A673 (cell line): ENCODE measurements at regions of chr3 and their contacts with region 1.

Region 1: GRCh38 chr3:184298759-184299496 is at the start of gene PSMD2:
- DNase-seq: peak; percentile 98
- H3K4me3 ChIP-seq: peak within 1 kb of the TSS; percentile 88
- H3K27ac ChIP-seq: peak within 1 kb of the TSS; percentile 80
- H3K4me1 ChIP-seq: peaks cover 9% of the 10 kb centered on the region
- H3K27me3 ChIP-seq: no peaks in the 10 kb centered on the region
- CTCF ChIP-seq: no peak
- total RNA-seq, gene PSMD2: 622 and 645 TPM in 2 replicates

Region 2: DNA sequence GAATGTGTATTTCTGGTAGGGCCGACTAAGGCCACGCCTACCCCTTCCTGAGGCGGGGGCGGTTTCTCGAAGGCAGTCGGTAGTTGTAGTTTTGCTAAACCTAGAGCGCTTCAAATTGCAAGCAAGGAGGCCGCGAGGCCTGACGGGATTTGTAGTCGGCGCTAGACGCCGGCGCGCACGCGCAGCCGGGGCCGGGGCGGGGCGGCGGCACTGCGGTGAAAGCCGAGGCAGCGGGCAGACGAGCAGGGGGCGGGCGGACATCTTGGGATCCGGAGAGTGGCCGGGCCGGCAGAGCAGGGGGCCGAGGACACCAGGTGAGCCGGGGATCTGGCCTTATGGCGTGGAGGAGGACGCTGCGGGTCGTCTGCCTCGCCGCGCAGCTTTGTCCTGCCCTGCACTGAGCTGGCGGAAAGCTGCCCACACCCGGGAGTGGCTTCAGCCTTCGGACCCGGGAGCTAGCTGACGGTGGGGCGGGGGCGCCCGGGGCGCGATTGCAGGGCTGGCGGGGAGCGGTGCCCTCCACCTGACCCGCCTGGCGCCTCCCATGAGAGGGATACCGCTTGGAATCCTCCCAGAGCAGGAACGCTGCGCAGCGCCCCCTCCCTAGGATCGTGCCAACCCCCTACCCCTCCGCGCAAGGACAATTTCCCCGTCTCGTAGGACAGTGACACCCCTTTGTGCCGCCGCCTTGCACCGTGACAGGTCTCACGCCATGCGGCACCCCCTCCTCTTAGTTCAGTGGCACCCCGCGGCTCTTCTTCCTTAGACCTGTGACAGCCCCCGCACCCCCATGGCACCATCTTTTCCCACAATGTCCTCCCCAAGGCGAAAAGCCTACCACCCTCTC is 124.1 kb before region 1 on chr3 and contains the start of gene AP2M1:
- CTCF ChIA-PET with region 1: no interaction called
- POLR2A ChIA-PET with region 1: no interaction called
- intact Hi-C with region 1: loop called (anchors 5 kb)
- DNase-seq: peak; percentile 99
- H3K4me3 ChIP-seq: peak within 1 kb of the TSS; percentile 95
- H3K27ac ChIP-seq: peak within 1 kb of the TSS; percentile 89
- H3K4me1 ChIP-seq: peaks cover 9% of the 10 kb centered on the region
- H3K27me3 ChIP-seq: no peaks in the 10 kb centered on the region
- CTCF ChIP-seq: no peak; the same call in 1 of the 2 replicates
- total RNA-seq, gene AP2M1: 382 and 419 TPM in 2 replicates

Region 3: GRCh38 chr3:184209146-184209923 is 89.6 kb before region 1 on chr3:
- CTCF ChIA-PET with region 1: no interaction called
- POLR2A ChIA-PET with region 1: no interaction called
- intact Hi-C with region 1: no loop called
- DNase-seq: no peak
- H3K4me3 ChIP-seq: no peak overlapping the region
- H3K27ac ChIP-seq: no peak overlapping the region
- H3K4me1 ChIP-seq: no peaks in the 10 kb centered on the region
- H3K27me3 ChIP-seq: peaks cover 15% of the 10 kb centered on the region
- CTCF ChIP-seq: no peak

Region 4: GRCh38 chr3:184314363-184314699 is 15.4 kb after region 1 on chr3 and contains the start of gene EIF4G1:
- CTCF ChIA-PET with region 1: no interaction called
- POLR2A ChIA-PET with region 1: no interaction called
- intact Hi-C with region 1: loop called (anchors 1 kb)
- DNase-seq: peak; percentile 95
- H3K4me3 ChIP-seq: peak within 1 kb of the TSS; percentile 93
- H3K27ac ChIP-seq: peak within 1 kb of the TSS; percentile 92
- H3K4me1 ChIP-seq: peaks cover 25% of the 10 kb centered on the region
- H3K27me3 ChIP-seq: no peaks in the 10 kb centered on the region
- CTCF ChIP-seq: no peak
- total RNA-seq, gene EIF4G1: 475 and 559 TPM in 2 replicates